A673 (cell line): ENCODE measurements at regions of chr5 and their contacts with region 1.

Region 1: GRCh38 chr5:121949867-121950266 is 11.9 kb upstream of the SRFBP1 start:
- DNase-seq: peak; percentile 69
- H3K4me3 ChIP-seq: no peak overlapping the region
- H3K27ac ChIP-seq: no peak overlapping the region
- H3K4me1 ChIP-seq: no peaks in the 10 kb centered on the region
- H3K27me3 ChIP-seq: no peaks in the 10 kb centered on the region
- CTCF ChIP-seq: peak; percentile 75

Region 2: DNA sequence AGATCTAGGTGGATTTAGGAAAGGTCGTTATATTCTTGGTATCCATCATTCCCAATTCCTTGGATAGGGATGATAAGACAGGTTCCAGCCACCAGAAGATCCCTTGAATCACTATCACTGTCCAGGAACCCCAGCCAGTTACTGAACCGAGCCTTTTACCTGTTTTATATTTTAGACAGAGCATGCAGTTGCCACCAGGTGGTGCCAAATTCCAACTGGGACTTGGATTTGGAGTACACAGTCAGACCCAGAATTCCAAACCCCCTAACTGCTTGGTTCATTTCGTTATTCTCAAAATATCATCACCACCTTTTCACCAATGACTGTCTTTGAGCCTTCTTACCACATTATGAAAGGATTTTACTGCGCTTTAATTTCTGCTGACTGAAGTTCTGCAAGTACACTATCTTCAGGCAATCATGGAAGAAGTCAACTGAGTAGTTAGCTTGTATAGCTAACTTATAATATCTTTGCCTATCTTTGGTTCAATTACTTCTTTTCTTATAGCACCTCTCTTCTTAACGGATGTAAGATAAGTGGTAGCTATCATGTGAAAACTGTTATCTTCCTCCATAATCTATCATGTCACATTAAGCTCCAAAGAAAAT is 1293.9 kb before region 1 on chr5:
- CTCF ChIA-PET with region 1: no interaction called
- POLR2A ChIA-PET with region 1: no interaction called
- intact Hi-C with region 1: loop called (anchors 2 kb)
- DNase-seq: peak; percentile 60
- H3K4me3 ChIP-seq: no peak overlapping the region
- H3K27ac ChIP-seq: no peak overlapping the region
- H3K4me1 ChIP-seq: no peaks in the 10 kb centered on the region
- H3K27me3 ChIP-seq: no peaks in the 10 kb centered on the region
- CTCF ChIP-seq: peak; percentile 80

Region 3: DNA sequence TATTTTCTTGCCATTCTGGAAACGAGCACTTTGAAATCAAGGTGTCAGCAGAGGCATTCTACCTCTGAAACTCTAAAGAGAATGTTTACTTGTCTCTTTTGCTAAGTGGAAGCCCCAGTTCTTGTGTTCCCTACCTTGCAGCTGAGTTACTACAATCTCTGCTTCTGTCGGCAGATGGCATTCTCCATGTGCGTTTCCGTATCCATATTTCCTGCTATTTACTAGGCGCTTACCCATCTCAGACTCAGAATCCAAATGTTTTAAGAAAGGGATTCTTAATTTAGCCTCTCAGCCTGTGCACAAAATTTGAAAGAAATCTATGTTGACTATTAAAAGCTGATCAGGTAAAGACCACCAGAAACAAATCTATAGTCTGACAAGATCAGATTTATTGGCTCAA is 319.5 kb before region 1 on chr5:
- CTCF ChIA-PET with region 1: no interaction called
- POLR2A ChIA-PET with region 1: no interaction called
- intact Hi-C with region 1: loop called (anchors 10 kb)
- DNase-seq: peak; percentile 3
- H3K4me3 ChIP-seq: no peak overlapping the region
- H3K27ac ChIP-seq: no peak overlapping the region
- H3K4me1 ChIP-seq: peaks cover 4% of the 10 kb centered on the region
- H3K27me3 ChIP-seq: no peaks in the 10 kb centered on the region
- CTCF ChIP-seq: peak; percentile 33; the same call in 1 of the 2 replicates

Region 4: DNA sequence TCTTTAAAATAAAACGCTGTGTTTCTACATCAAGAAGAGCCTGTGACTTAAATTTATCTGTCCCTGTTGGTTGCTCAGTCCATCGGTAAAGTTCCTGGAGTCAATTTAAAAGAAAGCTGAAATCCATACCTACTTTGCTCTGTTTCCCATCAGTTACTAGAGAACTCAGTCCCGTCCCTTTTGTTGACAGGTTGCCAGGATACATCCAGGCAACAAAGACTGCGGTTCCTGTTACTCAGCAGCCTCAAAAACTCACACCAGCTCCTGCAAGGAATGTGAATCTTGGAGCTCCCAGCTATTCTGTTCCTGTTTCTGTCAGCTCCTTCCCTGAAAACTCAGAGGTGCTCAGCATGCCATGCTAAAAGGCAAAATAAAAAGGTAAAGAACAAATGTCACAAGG is 179.4 kb after region 1 on chr5 and contains the start of gene ZNF474:
- CTCF ChIA-PET with region 1: no interaction called
- POLR2A ChIA-PET with region 1: no interaction called
- intact Hi-C with region 1: no loop called
- DNase-seq: peak; percentile 42
- H3K4me3 ChIP-seq: no peak within 1 kb of the TSS
- H3K27ac ChIP-seq: no peak within 1 kb of the TSS
- H3K4me1 ChIP-seq: no peaks in the 10 kb centered on the region
- H3K27me3 ChIP-seq: no peaks in the 10 kb centered on the region
- CTCF ChIP-seq: no peak
- total RNA-seq, gene ZNF474: not detected in 2 replicates